ENCODE measurements at regions of chr15 and their contacts with region 1.

Region 1: DNA sequence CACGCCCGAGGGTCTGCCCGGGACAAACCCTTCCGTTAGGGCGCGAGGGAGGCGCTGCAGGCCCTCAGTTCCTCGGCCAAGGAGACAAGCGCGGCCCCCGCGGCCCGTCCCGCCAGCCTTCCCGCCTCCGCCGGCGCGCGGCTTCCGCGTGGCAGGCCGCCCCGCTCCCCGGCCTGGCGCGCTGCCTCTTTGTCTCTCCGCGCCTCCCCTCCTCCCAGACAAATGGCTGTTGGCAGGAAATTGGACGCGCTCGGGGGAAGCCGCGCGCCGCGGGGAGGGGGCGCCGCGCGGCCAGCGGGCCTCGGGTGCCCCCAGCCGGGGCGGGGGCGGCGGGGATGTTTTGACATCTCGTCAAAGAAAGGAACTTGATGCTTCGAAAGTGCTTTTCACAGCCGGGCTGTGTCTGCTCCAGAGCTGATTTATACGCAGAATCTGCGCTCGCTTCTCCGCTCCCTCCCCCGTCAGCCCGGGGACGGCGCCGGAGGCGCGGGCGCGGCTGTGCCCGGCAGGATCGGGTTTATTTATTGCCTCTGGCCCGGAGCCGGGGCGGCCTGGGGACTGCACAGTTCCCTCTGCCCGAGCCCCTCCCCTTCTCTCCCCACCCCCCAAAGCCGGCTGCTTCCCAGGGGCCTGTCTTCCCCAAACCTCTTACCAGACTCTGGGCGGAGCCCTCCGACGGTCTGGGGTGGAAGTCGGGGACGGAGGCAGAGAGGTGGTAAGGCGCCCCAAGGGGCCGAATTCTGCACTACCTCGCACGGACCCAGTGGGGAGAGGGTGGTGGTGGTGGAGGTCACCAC is 20.7 kb downstream of the SHF start:
- DNase-seq: peak; percentile 88 to 89
- H3K4me3 ChIP-seq: peak overlapping the region; percentile 52
- H3K4me3 Mint-ChIP-seq: peak overlapping the region; percentile 71
- H3K27ac Mint-ChIP-seq: peak overlapping the region; percentile 69
- H3K4me1 ChIP-seq: peaks cover 32% of the 10 kb centered on the region
- H3K4me1 Mint-ChIP-seq: peaks cover 17% of the 10 kb centered on the region
- H3K27me3 ChIP-seq: no peaks in the 10 kb centered on the region
- H3K27me3 Mint-ChIP-seq: no peaks in the 10 kb centered on the region
- CTCF ChIP-seq: peak; percentile 46 to 80

Region 2: GRCh38 chr15:45118131-45118588 is 48.9 kb before region 1 on chr15:
- CTCF ChIA-PET with region 1: interaction called, 24 read pairs
- POLR2A ChIA-PET with region 1: no interaction called
- intact Hi-C with region 1: no loop called
- DNase-seq: peak; percentile 88 to 92
- H3K4me3 ChIP-seq: no peak overlapping the region
- H3K4me3 Mint-ChIP-seq: peak overlapping the region; percentile 46
- H3K27ac Mint-ChIP-seq: peak overlapping the region; percentile 47
- H3K4me1 ChIP-seq: peaks cover 14% of the 10 kb centered on the region; the same call in 1 of the 2 replicates
- H3K4me1 Mint-ChIP-seq: peaks cover 27% of the 10 kb centered on the region
- H3K27me3 ChIP-seq: no peaks in the 10 kb centered on the region
- H3K27me3 Mint-ChIP-seq: peaks cover 4% of the 10 kb centered on the region
- CTCF ChIP-seq: peak; percentile 95 to 99

Region 3: DNA sequence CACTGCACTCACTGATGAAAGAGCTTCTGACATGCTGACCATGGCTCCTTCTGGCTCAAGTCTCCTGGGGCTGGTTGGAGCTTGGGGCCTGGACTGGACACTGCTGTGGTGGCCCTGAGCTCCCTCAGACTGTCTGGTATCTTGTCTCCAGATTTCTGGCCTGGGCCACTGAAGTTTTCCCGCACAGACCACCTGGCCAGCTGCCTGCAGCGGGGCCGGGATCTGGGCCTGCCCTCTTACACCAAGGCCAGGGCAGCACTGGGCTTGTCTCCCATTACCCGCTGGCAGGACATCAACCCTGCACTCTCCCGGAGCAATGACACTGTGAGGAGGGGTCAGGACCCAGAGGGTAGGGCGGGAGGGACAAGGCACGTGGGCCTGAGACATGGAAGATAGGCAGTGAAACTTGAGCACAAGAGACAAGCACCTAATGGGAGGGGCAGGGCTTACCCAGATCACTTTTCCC is 27.7 kb before region 1 on chr15:
- CTCF ChIA-PET with region 1: no interaction called
- POLR2A ChIA-PET with region 1: no interaction called
- intact Hi-C with region 1: no loop called
- DNase-seq: no peak
- H3K4me3 ChIP-seq: no peak overlapping the region
- H3K4me3 Mint-ChIP-seq: no peak overlapping the region
- H3K27ac Mint-ChIP-seq: no peak overlapping the region
- H3K4me1 ChIP-seq: no peaks in the 10 kb centered on the region
- H3K4me1 Mint-ChIP-seq: no peaks in the 10 kb centered on the region
- H3K27me3 ChIP-seq: no peaks in the 10 kb centered on the region
- H3K27me3 Mint-ChIP-seq: no peaks in the 10 kb centered on the region
- CTCF ChIP-seq: no peak

Region 4: GRCh38 chr15:45187894-45188830 is 21.1 kb after region 1 on chr15 and contains the start of gene SHF:
- CTCF ChIA-PET with region 1: interaction called, 16 read pairs
- POLR2A ChIA-PET with region 1: interaction called, 5 read pairs
- intact Hi-C with region 1: loop called (anchors 2 kb)
- DNase-seq: peak in 1 of 2 experiments; percentile 47
- H3K4me3 ChIP-seq: peak within 1 kb of the TSS; percentile 47
- H3K4me3 Mint-ChIP-seq: peak within 1 kb of the TSS; percentile 77
- H3K27ac Mint-ChIP-seq: no peak within 1 kb of the TSS
- H3K4me1 ChIP-seq: peaks cover 7% of the 10 kb centered on the region
- H3K4me1 Mint-ChIP-seq: peaks cover 13% of the 10 kb centered on the region
- H3K27me3 ChIP-seq: no peaks in the 10 kb centered on the region
- H3K27me3 Mint-ChIP-seq: no peaks in the 10 kb centered on the region
- CTCF ChIP-seq: no peak
- total RNA-seq, gene SHF: 11.9 and 12.9 TPM in 2 replicates

Region 5: GRCh38 chr15:45205192-45205591 is 38.2 kb after region 1 on chr15:
- CTCF ChIA-PET with region 1: interaction called, 66 read pairs
- POLR2A ChIA-PET with region 1: interaction called, 5 read pairs
- intact Hi-C with region 1: loop called (anchors 1 kb)
- DNase-seq: peak; percentile 75 to 80
- H3K4me3 ChIP-seq: no peak overlapping the region
- H3K4me3 Mint-ChIP-seq: no peak overlapping the region
- H3K27ac Mint-ChIP-seq: no peak overlapping the region
- H3K4me1 ChIP-seq: 0 out of 2 replicates have a peak, but pooled peaks cover 5% of the 10 kb centered on the region
- H3K4me1 Mint-ChIP-seq: no peaks in the 10 kb centered on the region
- H3K27me3 ChIP-seq: no peaks in the 10 kb centered on the region
- H3K27me3 Mint-ChIP-seq: no peaks in the 10 kb centered on the region
- CTCF ChIP-seq: peak; percentile 78 to 83

Region 6: GRCh38 chr15:45307230-45307924 is 140.3 kb after region 1 on chr15:
- CTCF ChIA-PET with region 1: no interaction called
- POLR2A ChIA-PET with region 1: no interaction called
- intact Hi-C with region 1: loop called (anchors 1 kb)
- DNase-seq: peak in 1 of 2 experiments; percentile 29
- H3K4me3 ChIP-seq: no peak overlapping the region
- H3K4me3 Mint-ChIP-seq: peak overlapping the region; percentile 9
- H3K27ac Mint-ChIP-seq: peak overlapping the region; percentile 23
- H3K4me1 ChIP-seq: peaks cover 51% of the 10 kb centered on the region
- H3K4me1 Mint-ChIP-seq: peaks cover 40% of the 10 kb centered on the region
- H3K27me3 ChIP-seq: no peaks in the 10 kb centered on the region
- H3K27me3 Mint-ChIP-seq: no peaks in the 10 kb centered on the region
- CTCF ChIP-seq: peak; percentile 50 to 62

Region 7: GRCh38 chr15:45448066-45448510 is 281.1 kb after region 1 on chr15:
- CTCF ChIA-PET with region 1: interaction called, 7 read pairs
- POLR2A ChIA-PET with region 1: no interaction called
- intact Hi-C with region 1: loop called (anchors 2 kb)
- DNase-seq: no peak
- H3K4me3 ChIP-seq: no peak overlapping the region
- H3K4me3 Mint-ChIP-seq: no peak overlapping the region
- H3K27ac Mint-ChIP-seq: peak overlapping the region; percentile 67
- H3K4me1 ChIP-seq: peaks cover 32% of the 10 kb centered on the region
- H3K4me1 Mint-ChIP-seq: peaks cover 31% of the 10 kb centered on the region
- H3K27me3 ChIP-seq: no peaks in the 10 kb centered on the region
- H3K27me3 Mint-ChIP-seq: no peaks in the 10 kb centered on the region
- CTCF ChIP-seq: no peak